Right ventricle myocardium inferior (tissue), 1 donor: ENCODE measurements at regions of chr1 and their contacts with region 1.

Region 1: GRCh38 chr1:43238085-43238484 is 31.7 kb upstream of the TMEM125 start:
- DNase-seq: no peak
- ATAC-seq: peak; percentile 80

Region 2: DNA sequence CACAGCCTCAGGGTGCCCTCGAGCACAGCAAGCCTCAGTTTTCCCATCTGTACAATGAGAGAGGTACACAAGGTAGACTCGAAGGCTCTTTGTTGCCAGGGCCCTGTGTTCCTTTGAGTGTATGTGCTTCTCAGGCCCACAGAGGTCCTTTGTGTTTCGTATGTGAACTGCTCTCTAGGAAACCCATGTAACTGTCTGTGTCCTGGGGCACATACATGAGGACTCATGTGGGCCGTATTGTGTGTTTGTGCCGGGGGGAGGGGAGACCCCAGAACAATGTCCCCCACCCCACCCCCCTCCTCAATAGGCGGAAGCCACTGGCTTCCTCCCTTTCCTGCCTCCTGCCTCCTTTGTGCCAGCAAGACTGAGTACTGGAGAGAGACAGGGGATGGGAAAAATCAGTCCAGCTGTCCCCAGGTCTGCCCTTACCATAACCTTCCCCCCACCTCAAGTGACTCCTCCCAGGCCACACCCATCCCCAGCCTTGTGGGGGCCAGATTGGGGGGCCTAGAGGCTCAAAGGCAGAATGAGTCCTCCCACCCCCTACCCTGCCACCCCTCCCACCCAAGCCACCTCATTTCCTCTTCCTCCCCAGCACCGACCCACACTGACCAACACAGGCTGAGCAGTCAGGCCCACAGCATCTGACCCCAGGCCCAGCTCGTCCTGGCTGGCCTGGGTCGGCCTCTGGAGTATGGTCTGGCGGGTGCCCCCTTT is 62.5 kb after region 1 on chr1 and contains the start of gene TIE1:
- intact Hi-C with region 1: loop called (anchors 2 kb)
- DNase-seq: no peak
- ATAC-seq: peak; percentile 47
- total RNA-seq, gene TIE1: 22.2 TPM

Region 3: DNA sequence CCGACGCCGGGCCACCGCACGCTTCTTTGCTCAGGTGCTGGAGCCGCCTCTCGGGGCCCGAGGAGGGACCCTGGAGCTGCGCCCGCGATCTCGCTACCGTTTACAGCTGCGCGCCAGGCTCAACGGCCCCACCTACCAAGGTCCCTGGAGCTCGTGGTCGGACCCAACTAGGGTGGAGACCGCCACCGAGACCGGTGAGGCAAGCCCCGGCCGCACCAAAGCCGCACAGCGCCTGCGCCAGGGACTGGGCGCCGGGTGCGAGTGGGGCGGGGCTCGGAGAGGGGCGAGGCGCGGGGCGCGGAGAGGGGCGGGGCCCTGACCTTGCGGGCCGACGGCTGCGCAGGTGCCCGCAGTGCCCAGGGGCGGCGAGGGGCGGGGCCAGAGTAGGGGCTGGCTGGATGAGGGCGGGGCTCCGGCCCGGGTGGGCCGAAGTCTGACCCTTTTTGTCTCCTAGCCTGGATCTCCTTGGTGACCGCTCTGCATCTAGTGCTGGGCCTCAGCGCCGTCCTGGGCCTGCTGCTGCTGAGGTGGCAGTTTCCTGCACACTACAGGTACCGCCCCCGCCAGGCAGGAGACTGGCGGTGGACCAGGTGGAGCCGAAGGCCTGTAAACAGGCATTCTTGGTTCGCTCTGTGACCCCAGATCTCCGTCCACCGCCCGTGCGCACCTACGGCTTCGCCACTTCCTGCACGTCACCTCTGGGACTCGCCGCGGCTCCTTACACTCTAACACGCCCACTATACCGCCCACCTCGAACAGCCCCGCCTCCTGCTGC is 110.9 kb after region 1 on chr1:
- intact Hi-C with region 1: loop called (anchors 2 kb)
- DNase-seq: peak; percentile 91
- ATAC-seq: peak; percentile 92

Region 4: DNA sequence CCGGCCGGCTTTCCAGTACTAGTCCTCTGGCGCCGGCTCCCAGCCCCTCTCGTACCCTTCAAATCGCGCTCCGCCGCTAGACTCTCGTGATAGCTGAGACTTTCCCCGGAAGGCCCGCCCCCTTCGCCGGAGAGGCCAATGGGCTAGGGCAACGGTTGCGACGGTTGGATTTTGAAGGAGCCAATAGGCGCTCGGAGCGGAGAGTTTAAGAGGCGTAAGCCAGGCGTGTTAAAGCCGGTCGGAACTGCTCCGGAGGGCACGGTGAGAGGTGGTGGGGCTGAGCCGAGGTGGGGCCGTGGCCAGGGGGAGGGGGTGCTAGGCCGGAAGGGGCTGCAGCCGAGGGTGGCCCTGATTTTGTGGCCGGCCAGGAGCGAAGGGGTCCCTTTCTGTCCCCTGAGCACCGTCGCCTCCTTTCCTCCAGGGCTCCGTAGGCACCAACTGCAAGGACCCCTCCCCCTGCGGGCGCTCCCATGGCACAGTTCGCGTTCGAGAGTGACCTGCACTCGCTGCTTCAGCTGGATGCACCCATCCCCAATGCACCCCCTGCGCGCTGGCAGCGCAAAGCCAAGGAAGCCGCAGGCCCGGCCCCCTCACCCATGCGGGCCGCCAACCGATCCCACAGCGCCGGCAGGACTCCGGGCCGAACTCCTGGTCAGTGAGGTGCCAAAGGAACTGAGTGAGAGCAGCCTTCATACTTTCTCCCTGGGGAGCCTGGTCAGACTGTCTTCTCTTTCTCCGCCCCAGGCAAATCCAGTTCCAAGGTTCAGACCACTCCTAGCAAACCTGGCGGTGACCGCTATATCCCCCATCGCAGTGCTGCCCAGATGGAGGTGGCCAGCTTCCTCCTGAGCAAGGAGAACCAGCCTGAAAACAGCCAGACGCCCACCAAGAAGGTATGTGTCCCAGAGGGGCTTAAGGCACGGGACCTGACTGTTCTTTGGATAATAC is 120.9 kb after region 1 on chr1 and contains the start of gene CDC20:
- intact Hi-C with region 1: loop called (anchors 2 kb)
- DNase-seq: peak; percentile 99
- ATAC-seq: peak; percentile 98
- total RNA-seq, gene CDC20: 1.6 TPM

Region 5: DNA sequence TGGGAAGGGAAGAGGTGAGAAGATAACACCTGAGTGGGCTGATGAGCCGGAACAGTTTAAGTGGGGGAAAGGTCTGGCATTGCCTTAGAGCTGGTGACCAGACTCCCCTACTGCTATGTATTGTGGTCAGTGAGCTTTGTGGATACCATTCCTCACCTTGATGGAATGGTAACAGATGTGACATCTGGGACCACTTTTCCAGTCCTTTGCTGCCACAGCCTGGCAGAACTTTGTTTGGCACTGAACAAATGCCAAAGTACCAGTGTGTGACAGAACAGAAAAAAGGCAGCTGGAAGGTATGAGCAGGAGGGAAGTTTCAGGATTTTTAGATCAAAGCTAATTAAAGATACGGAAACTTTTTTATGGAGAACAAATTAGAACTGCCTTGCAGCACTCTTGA is 145.4 kb after region 1 on chr1:
- intact Hi-C with region 1: loop called (anchors 2 kb)
- DNase-seq: no peak
- ATAC-seq: peak; percentile 35